Activated B cell treated with CpG ODN at 0.5 μM for 24 hours (primary cell): ENCODE measurements at regions of chr13 and their contacts with region 1.

Region 1: DNA sequence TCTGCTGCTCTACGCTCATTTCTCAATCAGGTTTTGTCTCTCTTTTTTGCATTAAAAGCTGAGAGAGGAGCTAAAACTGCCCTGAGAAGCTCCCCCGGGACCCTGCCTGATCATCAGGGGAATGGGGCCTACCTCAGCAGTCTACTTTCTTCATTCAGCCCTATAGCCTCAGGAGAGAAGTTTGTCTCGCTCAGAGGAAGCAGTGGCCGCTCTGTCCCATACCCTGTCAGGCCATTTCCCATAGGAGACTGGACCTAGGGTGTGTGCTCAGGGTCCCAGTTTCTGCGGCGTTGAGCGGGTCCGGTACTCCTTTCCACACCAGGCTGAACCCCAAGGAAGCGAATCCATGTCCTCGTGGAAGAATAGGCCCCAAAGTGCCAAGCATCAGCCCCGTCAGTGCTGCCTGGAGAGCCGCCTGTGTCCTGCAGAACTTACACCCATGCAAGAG is 21.7 kb downstream of the UBE2L5 start:
- DNase-seq: peak; percentile 76
- ATAC-seq: peak; percentile 88
- H3K4me3 Mint-ChIP-seq: peak overlapping the region; percentile 79
- H3K27ac Mint-ChIP-seq: peak overlapping the region; percentile 97
- H3K4me1 Mint-ChIP-seq: peaks cover 72% of the 10 kb centered on the region
- H3K27me3 Mint-ChIP-seq: no peaks in the 10 kb centered on the region
- CTCF ChIP-seq: no peak

Region 2: DNA sequence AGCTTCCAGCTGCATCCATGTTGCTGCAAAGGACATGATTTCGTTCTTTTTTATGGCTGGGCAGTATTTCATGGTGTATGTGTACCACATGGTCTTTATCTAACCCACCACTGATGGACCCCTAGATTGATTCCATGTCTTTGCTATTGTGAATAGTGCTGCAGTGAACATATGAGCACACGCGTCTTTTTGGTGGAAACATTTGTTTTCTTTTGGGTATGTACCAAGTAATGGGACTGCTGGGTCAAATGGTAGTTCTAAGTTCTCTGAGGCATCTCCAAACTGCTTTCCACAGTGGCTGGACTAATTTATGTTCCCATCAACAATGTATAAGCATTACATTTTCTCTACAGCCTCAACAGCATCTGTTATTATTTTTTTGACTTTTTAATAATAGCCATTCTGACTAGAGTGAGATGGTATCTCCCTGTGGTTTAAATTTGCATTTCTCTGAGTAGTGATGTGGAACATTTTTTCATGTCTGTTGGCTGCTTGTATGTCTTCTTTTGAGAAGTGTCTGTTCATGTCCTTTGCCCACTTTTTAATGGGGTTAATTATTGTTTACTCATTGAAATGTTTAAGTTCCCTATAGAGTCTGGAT is 28.5 kb before region 1 on chr13:
- CTCF ChIA-PET with region 1: no interaction called
- POLR2A ChIA-PET with region 1: interaction called, 120 read pairs
- intact Hi-C with region 1: no loop called
- DNase-seq: no peak
- ATAC-seq: peak; percentile 77
- H3K4me3 Mint-ChIP-seq: peak overlapping the region; percentile 61
- H3K27ac Mint-ChIP-seq: peak overlapping the region; percentile 86
- H3K4me1 Mint-ChIP-seq: peaks cover 78% of the 10 kb centered on the region
- H3K27me3 Mint-ChIP-seq: no peaks in the 10 kb centered on the region
- CTCF ChIP-seq: no peak

Region 3: DNA sequence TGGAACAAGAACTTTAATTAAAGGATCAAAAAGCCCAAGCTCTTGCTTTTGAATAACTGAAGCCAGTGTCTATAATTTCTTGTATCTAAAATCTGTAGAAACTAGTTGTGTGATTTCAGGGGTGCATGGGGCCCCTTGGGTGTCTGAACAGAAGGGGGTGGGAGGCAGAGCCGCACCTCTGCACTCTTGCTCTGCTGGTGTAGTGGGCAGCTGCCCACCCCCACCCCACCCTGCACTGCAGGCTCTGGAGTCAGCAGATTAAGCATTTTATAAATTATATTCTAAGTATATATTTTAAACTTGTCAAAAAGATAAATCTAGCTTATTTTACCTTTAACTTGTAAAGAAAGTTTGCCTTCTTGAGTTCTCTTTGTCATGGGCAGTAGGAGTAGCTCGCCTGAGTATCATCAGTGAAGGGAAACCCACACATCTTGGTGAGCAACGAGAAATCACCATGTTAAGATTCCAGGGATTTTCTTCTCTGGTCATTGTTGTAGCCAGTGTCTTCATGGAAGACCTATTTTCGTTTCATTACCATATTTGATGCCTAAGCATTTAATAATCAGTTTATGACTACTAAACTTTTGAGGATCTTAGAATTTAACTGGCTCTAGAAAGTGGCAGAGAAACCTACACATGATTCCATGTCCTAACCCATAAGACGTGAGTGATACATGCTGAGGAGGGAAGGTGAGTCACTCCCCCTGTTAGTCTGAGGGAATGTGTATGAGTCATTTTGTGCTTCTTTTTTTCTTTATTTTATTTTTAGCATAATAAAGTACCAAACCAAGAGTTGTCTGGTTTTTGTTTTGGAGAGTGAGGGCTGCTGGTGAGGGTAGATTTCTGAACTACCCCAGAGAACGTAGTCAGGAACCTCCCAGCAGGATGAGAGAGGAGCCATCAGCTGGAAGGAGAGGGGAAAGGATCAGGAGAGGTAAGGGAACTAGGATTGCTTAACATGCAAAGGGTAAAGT is 14.0 kb before region 1 on chr13:
- CTCF ChIA-PET with region 1: interaction called, 5 read pairs
- POLR2A ChIA-PET with region 1: interaction called, 120 read pairs
- intact Hi-C with region 1: loop called (anchors 1 kb)
- DNase-seq: no peak
- ATAC-seq: peak; percentile 87
- H3K4me3 Mint-ChIP-seq: peak overlapping the region; percentile 77
- H3K27ac Mint-ChIP-seq: peak overlapping the region; percentile 87
- H3K4me1 Mint-ChIP-seq: peaks cover 28% of the 10 kb centered on the region
- H3K27me3 Mint-ChIP-seq: no peaks in the 10 kb centered on the region
- CTCF ChIP-seq: no peak

Region 4: GRCh38 chr13:30787738-30788525 is 344.0 kb after region 1 on chr13:
- CTCF ChIA-PET with region 1: no interaction called
- POLR2A ChIA-PET with region 1: no interaction called
- intact Hi-C with region 1: no loop called
- DNase-seq: no peak
- ATAC-seq: no peak
- H3K4me3 Mint-ChIP-seq: no peak overlapping the region
- H3K27ac Mint-ChIP-seq: no peak overlapping the region
- H3K4me1 Mint-ChIP-seq: no peaks in the 10 kb centered on the region
- H3K27me3 Mint-ChIP-seq: no peaks in the 10 kb centered on the region
- CTCF ChIP-seq: no peak